Cardiac septum (tissue), 1 donor: ENCODE measurements at regions of chr11 and their contacts with region 1.

Region 1: DNA sequence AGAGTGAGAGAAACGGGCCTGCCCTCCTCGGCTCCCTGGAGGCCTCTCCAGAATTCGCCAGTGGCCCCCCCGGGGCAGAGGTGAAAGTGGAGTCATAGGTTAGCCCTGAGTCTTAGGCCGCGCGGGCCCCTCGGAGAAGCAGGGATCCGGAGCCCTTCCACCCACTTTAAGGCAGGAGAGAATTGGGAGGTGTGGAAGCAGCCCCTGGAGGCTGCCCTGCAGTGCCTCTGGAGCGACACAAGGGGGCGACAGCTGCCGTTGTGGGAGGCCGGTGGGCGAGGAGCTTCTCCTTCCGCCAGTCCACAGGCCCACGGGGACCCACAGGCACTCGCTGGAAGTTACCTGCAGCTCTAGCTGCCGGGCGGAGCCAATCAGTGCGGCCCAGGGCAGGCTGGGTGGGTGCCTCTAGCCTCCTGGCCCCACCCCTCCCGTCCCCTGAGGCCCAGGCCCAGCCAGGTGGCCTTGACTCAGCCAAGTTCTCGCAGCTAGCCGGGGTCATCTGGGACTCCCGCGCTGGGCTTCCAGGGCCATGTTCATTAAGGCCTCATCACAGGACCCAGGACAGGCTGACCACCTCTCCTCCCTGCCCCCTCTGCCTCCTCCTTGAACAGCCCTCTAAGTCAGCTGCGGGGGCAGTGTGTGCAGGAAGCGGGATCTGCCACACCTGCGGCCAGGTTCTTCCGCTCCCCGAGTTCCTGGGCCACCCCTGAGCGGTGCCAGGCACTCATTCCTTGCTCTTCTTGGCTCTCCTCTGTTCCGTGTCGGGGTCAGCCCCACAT is 5.0 kb downstream of the DGKZ start:
- DNase-seq: peak; percentile 86

Region 2: DNA sequence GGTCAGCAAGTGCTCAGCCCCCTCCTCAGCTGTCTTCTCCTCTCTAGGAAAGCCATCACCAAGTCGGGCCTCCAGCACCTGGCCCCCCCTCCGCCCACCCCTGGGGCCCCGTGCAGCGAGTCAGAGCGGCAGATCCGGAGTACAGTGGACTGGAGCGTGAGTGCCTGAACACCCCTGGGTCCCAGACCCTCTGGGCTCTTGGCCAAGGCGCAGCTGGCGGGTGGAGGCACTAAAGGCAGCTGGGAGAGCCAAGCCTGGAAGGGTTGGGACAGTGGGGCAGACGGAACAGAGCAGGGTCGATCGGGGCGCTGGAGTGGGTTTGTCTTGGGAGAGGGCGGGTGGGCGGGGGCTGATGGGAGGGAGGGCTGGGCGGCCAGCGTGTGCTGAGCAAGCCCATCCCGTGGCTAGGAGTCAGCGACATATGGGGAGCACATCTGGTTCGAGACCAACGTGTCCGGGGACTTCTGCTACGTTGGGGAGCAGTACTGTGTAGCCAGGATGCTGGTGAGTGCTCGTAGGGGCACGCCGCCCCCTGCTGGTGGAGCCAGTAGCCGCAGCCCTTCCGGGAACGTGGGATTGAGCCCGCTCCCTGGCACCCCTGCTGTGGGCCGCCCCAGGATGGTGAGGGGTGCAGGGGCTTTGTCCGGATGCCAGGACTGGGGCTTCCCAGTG is 15.1 kb after region 1 on chr11:
- intact Hi-C with region 1: loop called (anchors 1 kb)
- DNase-seq: peak; percentile 91